Activated CD4-positive, alpha-beta T cell treated with anti-CD3 and anti-CD28 coated beads, Interleukin-2, amount 10 ng/mL, durations not matched to agents 24 days and 14 days (primary cell): ENCODE measurements at regions of chr3 and their contacts with region 1.

Region 1: DNA sequence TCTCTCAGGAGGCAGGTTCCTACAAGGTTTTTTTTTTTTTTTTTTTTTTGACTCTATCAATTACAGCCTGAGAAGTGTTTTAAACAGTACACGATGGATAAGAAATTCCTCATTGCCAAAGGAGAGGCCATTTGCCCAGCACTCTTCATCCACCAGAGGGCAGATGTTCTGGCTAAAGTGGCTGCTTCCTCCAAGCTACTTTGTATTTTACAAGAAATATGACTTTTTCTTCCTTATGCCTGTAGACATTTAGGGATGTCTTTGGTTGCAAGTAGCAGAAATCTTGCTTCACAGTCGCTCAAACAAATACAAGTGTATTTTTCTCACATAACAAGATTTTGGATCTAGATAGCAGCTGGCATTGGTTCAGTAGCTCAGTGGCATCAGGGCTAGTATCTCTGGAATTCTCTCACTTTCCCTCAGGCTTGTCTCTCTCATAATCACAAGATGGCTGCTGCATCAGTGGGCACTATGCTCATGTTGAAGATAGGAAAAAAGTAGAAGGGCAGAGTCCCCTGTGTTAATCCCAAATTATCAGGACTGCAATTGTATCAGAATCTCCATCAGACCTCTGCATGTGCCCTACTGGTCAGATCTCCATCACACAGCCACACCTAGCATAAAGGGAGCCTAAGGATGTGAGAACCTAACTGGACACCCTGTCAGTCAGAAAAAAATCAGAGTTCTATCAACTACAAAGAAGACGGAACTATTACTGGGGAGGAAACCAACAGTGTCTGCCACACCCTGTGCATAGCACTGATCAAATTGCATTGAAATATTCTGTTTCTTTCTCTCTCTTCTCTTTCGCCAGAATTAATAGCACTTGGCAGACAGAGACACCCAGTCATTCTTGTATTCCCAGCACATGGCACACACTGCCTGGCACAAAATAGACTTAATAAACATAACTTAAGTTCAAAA is 138.9 kb upstream of the COL8A1 start:
- DNase-seq: no peak
- H3K4me3 Mint-ChIP-seq: no peak overlapping the region
- H3K27ac Mint-ChIP-seq: no peak overlapping the region
- H3K4me1 Mint-ChIP-seq: no peaks in the 10 kb centered on the region
- H3K27me3 Mint-ChIP-seq: peaks cover 2% of the 10 kb centered on the region

Region 2: GRCh38 chr3:99614768-99615167 is 115.3 kb after region 1 on chr3:
- intact Hi-C with region 1: no loop called
- DNase-seq: no peak
- H3K4me3 Mint-ChIP-seq: no peak overlapping the region
- H3K27ac Mint-ChIP-seq: no peak overlapping the region
- H3K4me1 Mint-ChIP-seq: no peaks in the 10 kb centered on the region
- H3K27me3 Mint-ChIP-seq: no peaks in the 10 kb centered on the region

Region 3: GRCh38 chr3:99686955-99687612 is 187.6 kb after region 1 on chr3:
- intact Hi-C with region 1: loop called (anchors 2 kb)
- DNase-seq: peak; percentile 80
- H3K4me3 Mint-ChIP-seq: no peak overlapping the region
- H3K27ac Mint-ChIP-seq: no peak overlapping the region
- H3K4me1 Mint-ChIP-seq: no peaks in the 10 kb centered on the region
- H3K27me3 Mint-ChIP-seq: peaks cover 8% of the 10 kb centered on the region